Posterior cingulate gyrus (tissue), 11 donors: ENCODE measurements at regions of chr18 and their contacts with region 1.

Region 1: GRCh38 chr18:5842653-5843052 is 52.7 kb downstream of the TMEM200C start:
- DNase-seq: no peak

Region 2: GRCh38 chr18:5600378-5601071 is 242.1 kb before region 1 on chr18:
- intact Hi-C with region 1: loop called (anchors 2 kb)
- DNase-seq: no peak